ENCODE measurements at regions of chr2 and their contacts with region 1.

Region 1: DNA sequence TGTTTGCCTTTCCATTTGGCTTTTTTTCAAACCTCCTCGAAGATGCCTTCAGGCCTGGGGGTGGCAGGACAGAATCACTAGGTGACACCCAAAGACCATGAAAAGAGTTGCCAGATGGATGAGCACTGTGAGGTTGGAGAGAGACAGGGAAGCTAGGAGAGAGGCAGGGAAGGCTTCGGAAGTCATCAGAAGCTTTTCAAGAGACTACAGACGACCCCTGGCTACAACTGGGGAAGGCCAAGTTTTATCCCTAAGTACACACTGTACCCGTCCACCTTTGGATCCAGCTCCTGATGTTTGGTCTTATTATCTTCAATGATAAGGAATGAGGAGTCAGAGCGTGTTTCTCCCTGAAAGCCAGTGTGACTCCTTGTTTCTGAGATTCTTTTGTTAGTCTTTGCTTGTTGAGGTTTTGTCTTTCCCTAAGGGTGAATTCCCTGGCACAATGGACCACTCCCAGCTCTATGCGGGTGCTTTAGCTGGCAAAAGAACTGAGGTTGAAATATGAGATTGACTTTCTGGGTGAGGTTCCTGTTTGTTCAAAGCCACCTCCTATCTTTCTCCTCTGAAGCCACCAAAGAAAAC is 33.4 kb upstream of the SLC9A2 start:
- DNase-seq: peak; percentile 79
- H3K4me3 ChIP-seq: no peak overlapping the region
- H3K27ac ChIP-seq: no peak overlapping the region
- H3K4me1 ChIP-seq: peaks cover 10% of the 10 kb centered on the region
- H3K27me3 ChIP-seq: no peaks in the 10 kb centered on the region
- CTCF ChIP-seq: peak in 1 of 2 donors; percentile 10

Region 2: DNA sequence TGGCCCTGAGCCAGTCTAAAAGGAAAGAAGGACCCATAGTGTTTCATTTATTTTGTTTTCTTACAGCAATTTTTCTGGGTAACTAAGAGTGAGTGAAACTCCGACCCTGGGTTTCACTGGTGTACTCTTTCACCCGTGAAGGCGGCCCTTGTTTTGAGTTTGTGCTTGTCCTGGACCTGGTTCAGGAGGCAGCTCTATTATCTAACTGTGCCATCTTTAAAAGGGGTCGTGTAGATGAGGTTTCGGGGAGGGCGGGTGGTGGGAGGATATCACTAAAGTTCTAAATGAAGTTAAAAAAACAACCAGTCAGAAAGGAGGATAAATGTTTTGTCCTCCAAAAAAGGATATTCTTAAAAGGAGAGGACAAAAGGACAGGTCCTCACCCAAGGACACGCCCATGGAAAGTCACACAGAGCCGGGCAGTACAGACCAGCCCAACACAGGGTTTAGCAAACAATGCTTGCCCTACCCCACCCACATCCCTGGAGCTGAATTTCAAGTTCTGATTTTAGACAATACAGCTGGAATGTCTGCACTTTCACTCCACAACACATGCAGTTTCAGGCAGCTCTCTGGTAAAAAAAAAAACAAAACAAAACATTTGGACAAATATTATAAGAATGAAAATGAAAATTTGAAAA is 45.2 kb before region 1 on chr2:
- CTCF ChIA-PET with region 1: no interaction called
- dilution Hi-C with region 1: loop called (anchors 5 kb)
- in situ Hi-C with region 1: no loop called
- intact Hi-C with region 1: no loop called
- DNase-seq: no peak
- H3K4me3 ChIP-seq: no peak overlapping the region
- H3K27ac ChIP-seq: no peak overlapping the region
- H3K4me1 ChIP-seq: no peaks in the 10 kb centered on the region
- H3K27me3 ChIP-seq: peaks cover 2% of the 10 kb centered on the region
- CTCF ChIP-seq: no peak

Region 3: GRCh38 chr2:102551329-102552096 is 34.4 kb before region 1 on chr2:
- CTCF ChIA-PET with region 1: no interaction called
- dilution Hi-C with region 1: no loop called
- in situ Hi-C with region 1: no loop called
- intact Hi-C with region 1: no loop called
- DNase-seq: no peak
- H3K4me3 ChIP-seq: no peak overlapping the region
- H3K27ac ChIP-seq: no peak overlapping the region
- H3K4me1 ChIP-seq: no peaks in the 10 kb centered on the region
- H3K27me3 ChIP-seq: peaks cover 2% of the 10 kb centered on the region
- CTCF ChIP-seq: no peak

Measured in mammary epithelial cell (primary cell).